ENCODE measurements at regions of chr17 and their contacts with region 1.

Region 1: GRCh38 chr17:44108440-44109324 is 14.8 kb downstream of the HDAC5 start:
- DNase-seq: peak; percentile 62 to 79 (median 75)
- ATAC-seq: peak; percentile 40
- H3K4me3 ChIP-seq: no peak overlapping the region
- H3K4me1 ChIP-seq: peaks cover 37% of the 10 kb centered on the region
- CTCF ChIP-seq: no peak

Region 2: DNA sequence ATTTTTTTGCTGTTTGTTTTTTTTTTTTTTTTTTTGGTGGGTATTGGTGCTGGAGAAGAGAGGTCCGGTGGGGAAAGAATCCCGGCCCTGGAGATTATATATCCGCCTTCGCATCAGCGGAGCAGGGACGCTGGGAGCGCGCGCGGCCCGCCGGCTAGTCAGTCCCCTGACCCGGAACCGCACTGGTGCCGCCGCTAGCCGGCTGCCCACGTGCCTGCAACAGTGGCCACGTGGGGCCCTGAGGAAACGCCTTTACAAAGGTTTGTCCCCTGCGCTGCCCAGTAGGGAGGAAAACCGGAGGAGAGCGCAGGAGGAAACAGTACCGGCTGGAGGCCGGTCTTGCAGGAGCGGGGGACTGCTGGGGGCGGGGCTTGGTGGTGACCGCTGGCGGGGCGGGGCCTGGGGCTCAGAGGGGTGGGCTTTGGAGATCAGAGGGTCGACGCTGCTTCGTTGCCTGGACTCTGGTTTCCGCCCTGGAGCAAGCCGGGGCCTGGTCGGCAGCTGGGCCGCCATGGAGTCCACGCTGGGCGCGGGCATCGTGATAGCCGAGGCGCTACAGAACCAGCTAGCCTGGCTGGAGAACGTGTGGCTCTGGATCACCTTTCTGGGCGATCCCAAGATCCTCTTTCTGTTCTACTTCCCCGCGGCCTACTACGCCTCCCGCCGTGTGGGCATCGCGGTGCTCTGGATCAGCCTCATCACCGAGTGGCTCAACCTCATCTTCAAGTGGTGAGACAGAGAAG is 38.1 kb before region 1 on chr17 and contains the start of gene G6PC3:
- intact Hi-C with region 1: loop called in 1 of 2 experiments (anchors 5 kb)
- DNase-seq: peak; percentile 95 to 96 (median 96)
- ATAC-seq: peak; percentile 88
- H3K4me3 ChIP-seq: peak within 1 kb of the TSS; percentile 25
- H3K4me1 ChIP-seq: peaks cover 20% of the 10 kb centered on the region
- CTCF ChIP-seq: no peak
- total RNA-seq, gene G6PC3: 29.5 to 48.1 (median 30.0) TPM